Activated CD4-positive, alpha-beta T cell treated with anti-CD3 and anti-CD28 coated beads for 36 hours (primary cell): ENCODE measurements at regions of chr3 and their contacts with region 1.

Region 1: DNA sequence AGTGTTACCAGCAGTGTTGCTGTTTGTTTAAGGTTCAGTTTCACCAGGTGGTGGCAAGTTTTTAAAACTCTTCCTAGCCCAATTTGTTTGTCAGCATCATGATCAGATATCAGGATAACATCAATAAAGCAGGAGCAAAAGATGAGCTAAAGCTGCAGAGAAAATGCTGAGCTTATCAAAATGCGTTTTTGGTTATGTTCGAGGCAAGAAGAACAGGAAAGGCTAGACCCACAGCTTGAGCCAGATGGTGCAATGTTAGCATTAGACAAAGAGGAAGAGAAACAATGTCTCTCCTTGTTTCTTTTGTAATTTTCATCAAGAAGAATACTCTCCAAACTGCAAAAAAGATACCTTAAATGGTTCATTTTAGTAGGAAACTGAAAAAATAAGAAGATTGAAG is 66.2 kb downstream of the THRB start:
- DNase-seq: no peak
- ATAC-seq: no peak
- H3K4me3 Mint-ChIP-seq: no peak overlapping the region
- H3K27ac Mint-ChIP-seq: no peak overlapping the region
- H3K4me1 Mint-ChIP-seq: no peaks in the 10 kb centered on the region
- H3K27me3 Mint-ChIP-seq: no peaks in the 10 kb centered on the region

Region 2: DNA sequence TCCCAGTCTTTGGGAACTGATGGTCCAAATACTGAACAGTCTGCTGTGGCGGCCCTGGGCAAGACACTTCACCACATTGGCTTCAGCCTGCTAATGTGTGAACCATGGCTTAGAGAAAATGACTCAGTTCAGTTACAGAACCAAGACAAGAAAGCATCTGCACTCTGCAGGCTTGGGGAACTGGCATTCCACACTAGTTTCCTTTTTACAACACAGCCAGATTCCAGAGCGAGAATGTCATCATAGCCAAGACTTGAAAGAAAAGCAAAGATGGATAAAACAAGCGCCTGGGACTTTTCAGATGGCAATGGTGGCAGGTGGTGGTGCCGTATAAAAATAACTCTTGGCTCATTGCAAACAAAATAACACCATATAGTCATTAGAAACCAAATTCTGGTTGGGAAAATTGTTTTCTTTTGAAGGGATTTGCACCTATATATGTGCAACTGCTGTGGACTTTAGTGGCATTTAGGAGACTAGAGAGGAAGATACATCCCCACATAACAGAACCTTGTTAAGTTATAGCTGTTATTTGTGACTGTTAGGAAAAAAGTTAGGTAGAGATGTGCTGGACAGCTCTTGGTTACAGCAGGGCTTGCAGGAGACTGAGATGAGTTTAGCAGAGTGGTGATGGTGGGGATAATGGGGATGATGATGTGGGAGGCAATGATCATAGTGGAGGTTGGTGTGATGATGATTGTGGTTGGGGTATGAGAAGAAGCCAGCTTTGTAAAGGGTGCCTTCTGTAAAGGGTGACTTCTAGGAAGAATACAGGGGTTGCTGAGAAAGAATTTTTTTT is 207.4 kb before region 1 on chr3:
- CTCF ChIA-PET with region 1: no interaction called
- POLR2A ChIA-PET with region 1: no interaction called
- intact Hi-C with region 1: no loop called
- DNase-seq: no peak
- ATAC-seq: no peak
- H3K4me3 Mint-ChIP-seq: no peak overlapping the region
- H3K27ac Mint-ChIP-seq: no peak overlapping the region
- H3K4me1 Mint-ChIP-seq: no peaks in the 10 kb centered on the region
- H3K27me3 Mint-ChIP-seq: peaks cover 8% of the 10 kb centered on the region

Region 3: GRCh38 chr3:24899901-24900603 is 471.6 kb after region 1 on chr3:
- CTCF ChIA-PET with region 1: no interaction called
- POLR2A ChIA-PET with region 1: interaction called, 16 read pairs
- intact Hi-C with region 1: no loop called
- DNase-seq: no peak
- ATAC-seq: no peak
- H3K4me3 Mint-ChIP-seq: no peak overlapping the region
- H3K27ac Mint-ChIP-seq: no peak overlapping the region
- H3K4me1 Mint-ChIP-seq: no peaks in the 10 kb centered on the region
- H3K27me3 Mint-ChIP-seq: no peaks in the 10 kb centered on the region